GM10248 (cell line): ENCODE measurements at regions of chr16 and their contacts with region 1.

Region 1: DNA sequence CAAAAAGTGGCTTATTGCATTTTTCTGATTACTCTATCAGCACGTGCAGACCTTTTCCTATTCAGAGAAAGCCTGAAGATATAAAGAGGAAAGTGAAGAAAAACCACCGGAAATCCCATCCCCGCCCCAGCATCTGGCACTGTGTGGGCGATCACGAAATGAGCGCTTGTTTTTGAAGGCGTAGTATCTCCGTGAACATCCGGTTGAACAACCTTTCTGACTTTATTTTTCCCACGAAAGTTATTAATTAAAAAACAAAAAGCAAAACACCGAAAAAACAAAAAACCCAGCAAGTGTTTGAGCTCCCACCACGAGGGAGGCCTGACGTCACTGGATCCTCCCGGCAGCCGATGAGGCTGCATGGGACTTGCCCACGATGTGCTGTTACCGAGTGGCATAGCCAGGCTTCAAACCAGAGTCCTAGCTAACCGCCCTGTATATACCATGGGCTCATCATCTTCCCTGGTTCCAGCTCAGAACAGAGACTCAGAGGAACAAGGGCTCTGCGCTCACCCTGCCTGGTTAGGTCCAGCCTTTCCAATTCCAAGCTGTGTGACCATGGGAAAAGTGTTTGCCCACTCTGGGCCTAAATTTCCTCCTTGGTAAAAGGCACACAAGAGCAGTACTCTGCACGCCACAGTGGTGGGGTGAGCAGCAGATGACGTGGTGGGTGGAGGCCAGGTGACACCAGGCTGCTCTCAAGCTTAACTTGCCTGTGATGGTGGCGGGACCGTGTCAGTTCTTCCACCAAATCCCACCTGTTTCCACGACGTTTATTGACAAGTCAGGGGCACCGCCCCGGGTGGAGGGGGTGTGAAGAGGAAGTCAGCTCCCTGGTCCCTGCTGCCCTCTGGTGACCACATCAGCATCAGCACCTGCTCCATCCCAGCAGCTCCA is 34.3 kb upstream of the IL21R start:
- DNase-seq: peak; percentile 86
- CTCF ChIP-seq: peak; percentile 69

Region 2: GRCh38 chr16:27318392-27319226 is 49.1 kb before region 1 on chr16:
- CTCF ChIA-PET with region 1: interaction called, 12 read pairs
- POLR2A ChIA-PET with region 1: no interaction called
- DNase-seq: peak; percentile 62
- CTCF ChIP-seq: no peak

Region 3: GRCh38 chr16:27401768-27402568 is 34.3 kb after region 1 on chr16 and contains the start of gene IL21R:
- CTCF ChIA-PET with region 1: interaction called, 47 read pairs
- POLR2A ChIA-PET with region 1: interaction called, 5 read pairs
- DNase-seq: peak; percentile 84
- CTCF ChIP-seq: no peak

Region 4: GRCh38 chr16:27426423-27427408 is 59.0 kb after region 1 on chr16:
- CTCF ChIA-PET with region 1: interaction called, 11 read pairs
- POLR2A ChIA-PET with region 1: interaction called, 3 read pairs
- DNase-seq: peak; percentile 81
- CTCF ChIP-seq: no peak